ENCODE measurements at regions of chr7 and their contacts with region 1.

Region 1: GRCh38 chr7:28626624-28627262 is 214.4 kb downstream of the CREB5 start:
- DNase-seq: peak; percentile 63
- H3K4me3 ChIP-seq: no peak overlapping the region
- H3K27ac ChIP-seq: no peak overlapping the region
- H3K4me1 ChIP-seq: no peaks in the 10 kb centered on the region
- H3K27me3 ChIP-seq: no peaks in the 10 kb centered on the region
- CTCF ChIP-seq: peak; percentile 77

Region 2: DNA sequence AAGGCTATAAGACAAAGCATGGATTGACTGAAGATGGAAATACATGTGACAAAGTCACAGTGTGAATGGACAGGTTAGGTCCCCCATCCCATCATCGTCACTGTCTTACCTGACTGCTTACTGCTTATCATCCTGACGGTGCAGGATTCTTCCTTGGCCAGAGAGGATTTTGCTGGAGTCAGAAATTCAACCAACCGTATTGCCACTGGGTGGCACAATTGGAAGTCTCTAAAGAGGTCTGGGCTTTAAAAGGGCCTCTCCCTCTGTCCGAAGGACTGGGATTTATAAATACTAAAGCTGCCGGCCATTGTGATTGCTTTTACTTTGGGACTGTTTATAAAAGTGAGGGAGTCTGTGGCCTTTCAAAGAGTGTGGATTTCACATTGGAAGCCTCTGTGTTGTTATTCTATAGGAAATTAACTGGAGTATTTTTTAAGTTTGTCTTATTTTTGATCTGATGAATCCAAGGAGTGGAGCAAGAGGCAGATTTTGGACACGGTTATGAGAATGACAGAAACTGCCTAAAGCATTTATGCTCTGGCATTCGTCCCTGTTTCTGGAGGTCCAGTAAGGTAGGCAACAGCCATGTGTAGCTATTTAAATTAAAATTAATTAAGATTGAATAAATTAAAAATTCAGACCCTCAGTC is 327.7 kb before region 1 on chr7:
- CTCF ChIA-PET with region 1: no interaction called
- POLR2A ChIA-PET with region 1: no interaction called
- intact Hi-C with region 1: loop called (anchors 5 kb)
- DNase-seq: peak; percentile 33
- H3K4me3 ChIP-seq: no peak overlapping the region
- H3K27ac ChIP-seq: no peak overlapping the region
- H3K4me1 ChIP-seq: no peaks in the 10 kb centered on the region
- H3K27me3 ChIP-seq: no peaks in the 10 kb centered on the region
- CTCF ChIP-seq: peak; percentile 50

Region 3: GRCh38 chr7:28389504-28390395 is 237.0 kb before region 1 on chr7:
- CTCF ChIA-PET with region 1: interaction called, 3 read pairs
- POLR2A ChIA-PET with region 1: no interaction called
- intact Hi-C with region 1: loop called (anchors 1 kb)
- DNase-seq: peak; percentile 70
- H3K4me3 ChIP-seq: peak overlapping the region; percentile 21
- H3K27ac ChIP-seq: no peak overlapping the region
- H3K4me1 ChIP-seq: peaks cover 3% of the 10 kb centered on the region
- H3K27me3 ChIP-seq: peaks cover 7% of the 10 kb centered on the region
- CTCF ChIP-seq: peak; percentile 85

Region 4: GRCh38 chr7:28853834-28854749 is 227.3 kb after region 1 on chr7:
- CTCF ChIA-PET with region 1: no interaction called
- POLR2A ChIA-PET with region 1: no interaction called
- intact Hi-C with region 1: loop called (anchors 5 kb)
- DNase-seq: peak; percentile 85
- H3K4me3 ChIP-seq: peak overlapping the region; percentile 48
- H3K27ac ChIP-seq: no peak overlapping the region
- H3K4me1 ChIP-seq: no peaks in the 10 kb centered on the region
- H3K27me3 ChIP-seq: peaks cover 47% of the 10 kb centered on the region
- CTCF ChIP-seq: peak; percentile 95

Measured in A673 (cell line).